Gastrocnemius medialis (tissue), 4 donors: ENCODE measurements at regions of chr18 and their contacts with region 1.

Region 1: DNA sequence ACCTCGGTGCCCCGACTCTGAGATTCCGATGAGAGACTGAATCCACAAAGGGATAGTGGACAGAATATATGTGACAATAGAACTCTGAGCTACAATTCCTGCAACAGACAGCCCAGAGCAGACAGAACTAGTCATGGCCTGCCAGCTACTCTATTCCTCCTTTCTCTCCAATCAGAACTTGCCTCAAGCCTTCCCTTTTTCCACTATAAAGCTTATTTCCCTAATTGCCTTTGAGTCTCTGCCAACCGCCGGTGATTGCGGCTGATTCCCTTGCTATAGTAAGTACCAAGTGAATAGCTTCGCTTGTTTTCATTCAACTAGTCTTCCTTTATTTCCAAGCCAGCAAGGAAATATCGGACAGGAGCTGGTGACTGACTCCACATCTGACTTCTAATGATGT is 96.8 kb downstream of the DSC3 start:
- DNase-seq: no peak
- ATAC-seq: no peak
- H3K4me3 ChIP-seq: no peak overlapping the region
- H3K27ac ChIP-seq: no peak overlapping the region
- H3K4me1 ChIP-seq: no peaks in the 10 kb centered on the region
- H3K27me3 ChIP-seq: no peaks in the 10 kb centered on the region
- CTCF ChIP-seq: no peak
- POLR2A ChIP-seq: no peak

Region 2: GRCh38 chr18:30999887-31000628 is 54.3 kb after region 1 on chr18:
- in situ Hi-C with region 1: loop called in 1 of 4 experiments (anchors 10 kb)
- intact Hi-C with region 1: no loop called
- DNase-seq: no peak
- ATAC-seq: no peak
- H3K4me3 ChIP-seq: no peak overlapping the region
- H3K27ac ChIP-seq: no peak overlapping the region
- H3K4me1 ChIP-seq: no peaks in the 10 kb centered on the region
- H3K27me3 ChIP-seq: no peaks in the 10 kb centered on the region
- CTCF ChIP-seq: no peak
- POLR2A ChIP-seq: no peak